PC-9 (cell line): ENCODE measurements at regions of chr7 and their contacts with region 1.

Region 1: GRCh38 chr7:14604606-14605005 is 297.9 kb downstream of the DGKB start:
- DNase-seq: no peak
- H3K4me3 ChIP-seq: no peak overlapping the region
- H3K27ac ChIP-seq: no peak overlapping the region
- H3K4me1 ChIP-seq: no peaks in the 10 kb centered on the region
- H3K27me3 ChIP-seq: no peaks in the 10 kb centered on the region
- CTCF ChIP-seq: no peak

Region 2: DNA sequence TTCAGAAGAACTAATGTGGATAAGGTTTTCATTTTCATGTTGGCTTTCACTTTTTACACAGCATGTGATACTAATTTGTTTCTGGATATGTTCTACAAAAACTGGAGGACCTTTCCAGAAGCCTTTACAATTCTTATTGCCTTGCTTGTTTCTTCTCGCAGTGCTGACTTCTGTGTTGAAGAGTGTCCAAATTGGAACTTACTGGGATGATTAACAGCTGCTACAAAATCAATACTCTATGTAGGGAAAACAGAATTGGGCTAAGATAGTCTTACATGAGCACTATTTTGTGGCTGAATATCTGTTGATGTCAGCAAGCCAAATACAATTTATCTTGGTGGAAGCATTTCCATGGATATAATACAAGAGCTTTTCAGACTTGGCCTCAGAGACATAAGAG is 53.3 kb before region 1 on chr7:
- CTCF ChIA-PET with region 1: no interaction called
- POLR2A ChIA-PET with region 1: no interaction called
- intact Hi-C with region 1: loop called (anchors 10 kb)
- DNase-seq: no peak
- H3K4me3 ChIP-seq: no peak overlapping the region
- H3K27ac ChIP-seq: no peak overlapping the region
- H3K4me1 ChIP-seq: no peaks in the 10 kb centered on the region
- H3K27me3 ChIP-seq: no peaks in the 10 kb centered on the region
- CTCF ChIP-seq: no peak